ENCODE measurements at regions of chr6 and their contacts with region 1.

Region 1: GRCh38 chr6:151440930-151441329 is 11.0 kb downstream of the RMND1 start:
- DNase-seq: no peak
- H3K4me3 ChIP-seq: no peak overlapping the region
- H3K27ac ChIP-seq: no peak overlapping the region
- H3K4me1 ChIP-seq: peaks cover 0 to 36% (median 6%) of the 10 kb centered on the region in 4 donors
- H3K27me3 ChIP-seq: no peaks in the 10 kb centered on the region
- CTCF ChIP-seq: peak in 2 of 5 experiments; percentile 13 to 20
- EP300 ChIP-seq: no peak
- POLR2A ChIP-seq: no peak

Region 2: DNA sequence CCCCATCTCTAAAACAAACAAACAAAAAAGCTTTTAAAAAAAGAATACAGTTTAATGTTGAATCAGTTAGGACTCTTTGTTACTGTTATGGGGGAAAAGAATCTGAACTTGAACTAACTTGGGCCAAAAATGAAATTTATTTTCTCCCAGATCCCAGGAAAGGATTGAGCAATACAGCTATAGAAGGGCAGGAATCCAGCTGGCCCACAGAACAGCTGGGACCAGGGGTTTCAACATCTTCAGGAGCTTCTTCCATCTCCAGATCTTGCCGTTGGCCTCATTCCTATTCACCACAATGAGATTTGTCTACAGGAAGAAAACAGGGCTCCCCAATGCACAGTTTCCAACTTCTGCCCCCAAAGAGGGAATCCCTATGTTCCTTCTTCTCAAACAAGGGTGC is 244.4 kb before region 1 on chr6:
- in situ Hi-C with region 1: no loop called
- intact Hi-C with region 1: no loop called
- DNase-seq: peak; percentile 39
- H3K4me3 ChIP-seq: no peak overlapping the region
- H3K27ac ChIP-seq: peak overlapping the region in 3 of 4 donors; percentile 25 to 58 (median 46)
- H3K4me1 ChIP-seq: peaks cover 0 to 3% (median 0%) of the 10 kb centered on the region in 4 donors
- H3K27me3 ChIP-seq: no peaks in the 10 kb centered on the region
- CTCF ChIP-seq: no peak
- EP300 ChIP-seq: no peak
- POLR2A ChIP-seq: no peak

Region 3: DNA sequence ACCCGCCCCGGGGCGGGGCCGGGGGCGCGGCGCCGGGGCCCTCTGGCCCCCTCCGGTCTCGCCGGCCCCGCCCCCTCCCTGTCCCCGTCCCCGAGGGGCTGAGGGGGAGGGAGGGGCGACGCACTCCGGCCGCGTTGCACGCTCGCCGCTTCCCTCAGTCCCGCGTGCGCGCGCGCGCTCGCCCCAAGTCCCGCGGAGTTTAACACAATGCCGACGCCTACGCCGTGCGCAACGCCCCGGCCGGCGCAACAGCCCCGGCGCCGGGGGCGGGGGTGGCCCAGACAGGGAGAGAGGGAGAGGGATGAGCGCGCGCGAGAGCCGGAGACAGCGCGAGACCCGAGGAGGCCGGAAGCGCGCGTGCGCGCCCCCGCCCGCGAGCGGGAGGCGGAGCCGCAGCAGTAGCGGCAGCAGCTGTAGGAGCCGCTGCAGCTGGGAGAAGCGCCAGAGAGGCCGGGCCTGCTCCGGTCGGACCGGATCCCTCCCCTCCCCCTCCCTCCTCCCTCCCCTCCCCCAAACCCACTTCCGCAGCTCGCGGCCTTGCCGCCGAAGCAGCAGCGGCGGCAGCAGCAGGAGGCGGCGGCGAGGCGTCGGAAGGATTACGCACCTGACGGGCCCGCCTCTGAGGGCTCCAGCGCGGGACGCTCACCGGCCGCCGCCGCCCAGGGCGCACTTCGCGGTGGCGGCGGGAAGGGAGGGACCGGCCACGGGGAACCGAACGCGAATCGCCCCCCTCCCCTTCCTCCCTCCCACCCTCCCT is 50.5 kb before region 1 on chr6:
- in situ Hi-C with region 1: no loop called
- intact Hi-C with region 1: loop called (anchors 10 kb)
- DNase-seq: peak; percentile 97
- H3K4me3 ChIP-seq: peak overlapping the region; percentile 90 to 98 (median 96)
- H3K27ac ChIP-seq: peak overlapping the region; percentile 97 to 100 (median 100)
- H3K4me1 ChIP-seq: peaks cover 16 to 55% (median 29%) of the 10 kb centered on the region in 4 donors
- H3K27me3 ChIP-seq: no peaks in the 10 kb centered on the region
- CTCF ChIP-seq: peak in 1 of 5 experiments; percentile 18
- EP300 ChIP-seq: no peak
- POLR2A ChIP-seq: peak; percentile 70

Measured in transverse colon (tissue), 4 donors.